Psoas muscle (tissue), 8 donors: ENCODE measurements at regions of chr13 and their contacts with region 1.

Region 1: DNA sequence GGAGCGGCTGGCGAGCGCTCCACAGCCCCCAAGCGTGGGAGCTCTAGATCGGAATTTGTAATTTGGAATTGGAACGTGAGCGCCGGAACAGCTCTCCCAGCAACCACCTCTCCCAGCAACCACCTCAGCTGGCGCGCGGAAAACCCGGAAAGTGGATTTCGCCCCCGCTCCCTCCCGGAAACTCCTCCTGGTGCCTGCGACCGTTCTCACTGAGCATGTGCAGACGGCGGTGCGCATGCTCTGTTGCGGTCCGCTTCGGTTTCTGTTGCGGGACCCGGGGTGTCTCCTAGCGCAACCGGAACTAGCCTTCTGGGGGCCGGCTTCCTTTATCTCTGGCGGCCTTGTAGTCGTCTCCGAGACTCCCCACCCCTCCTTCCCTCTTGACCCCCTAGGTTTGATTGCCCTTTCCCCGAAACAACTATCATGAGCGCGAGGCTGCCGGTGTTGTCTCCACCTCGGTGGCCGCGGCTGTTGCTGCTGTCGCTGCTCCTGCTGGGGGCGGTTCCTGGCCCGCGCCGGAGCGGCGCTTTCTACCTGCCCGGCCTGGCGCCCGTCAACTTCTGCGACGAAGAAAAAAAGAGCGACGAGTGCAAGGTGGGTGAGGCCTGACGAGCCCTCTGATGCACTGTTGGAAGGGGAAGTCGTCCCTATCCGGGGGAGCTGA is at the start of gene TM9SF2:
- DNase-seq: peak; percentile 98 to 99
- ATAC-seq: peak; percentile 82 to 88 (median 86)
- H3K4me3 ChIP-seq: peak within 1 kb of the TSS; percentile 82
- H3K27ac ChIP-seq: peak within 1 kb of the TSS; percentile 90
- H3K4me1 ChIP-seq: peaks cover 65% of the 10 kb centered on the region
- H3K27me3 ChIP-seq: no peaks in the 10 kb centered on the region
- CTCF ChIP-seq: no peak
- total RNA-seq, gene TM9SF2: 30.6 to 45.2 (median 42.7) TPM

Region 2: DNA sequence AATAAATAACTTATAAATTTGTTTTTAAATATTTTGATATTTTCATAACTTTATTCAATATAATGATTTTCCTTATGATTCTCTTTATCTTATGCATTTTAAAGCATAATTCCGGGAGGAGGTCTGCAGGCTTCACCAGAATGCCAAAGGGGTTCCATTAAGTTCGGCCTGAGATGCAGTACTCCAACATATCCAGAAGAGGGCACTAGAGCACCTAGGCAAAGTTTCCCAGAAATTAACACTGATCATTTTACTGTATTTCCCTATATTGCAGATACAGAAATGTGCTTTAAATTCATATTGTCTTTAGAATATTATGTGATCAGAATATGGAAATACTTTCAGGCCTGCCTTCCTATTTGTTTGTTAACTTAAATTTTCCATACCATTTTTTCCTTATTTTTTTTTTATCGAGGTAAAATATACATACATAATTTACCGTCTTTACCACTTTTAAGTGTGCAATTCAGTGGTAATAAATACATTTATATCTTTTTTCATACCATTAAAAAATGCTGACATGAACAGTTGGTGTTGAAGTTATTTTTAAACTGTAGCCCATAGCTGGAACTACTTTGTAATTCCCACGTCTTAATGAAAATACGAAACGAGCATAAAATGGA is 58.9 kb before region 1 on chr13:
- intact Hi-C with region 1: loop called (anchors 5 kb)
- DNase-seq: no peak
- ATAC-seq: peak in 3 of 4 donors; percentile 63 to 75 (median 74)
- H3K4me3 ChIP-seq: no peak overlapping the region
- H3K27ac ChIP-seq: no peak overlapping the region
- H3K4me1 ChIP-seq: no peaks in the 10 kb centered on the region
- H3K27me3 ChIP-seq: peaks cover 0 to 3% (median 0%) of the 10 kb centered on the region in 3 donors
- CTCF ChIP-seq: peak; percentile 97

Region 3: GRCh38 chr13:99459099-99459850 is 42.0 kb before region 1 on chr13:
- intact Hi-C with region 1: no loop called
- DNase-seq: no peak
- ATAC-seq: no peak
- H3K4me3 ChIP-seq: no peak overlapping the region
- H3K27ac ChIP-seq: no peak overlapping the region
- H3K4me1 ChIP-seq: no peaks in the 10 kb centered on the region
- H3K27me3 ChIP-seq: peaks cover 0 to 3% (median 0%) of the 10 kb centered on the region in 3 donors
- CTCF ChIP-seq: no peak

Region 4: GRCh38 chr13:99606324-99607066 is 105.2 kb after region 1 on chr13:
- intact Hi-C with region 1: loop called in 1 of 2 experiments (anchors 5 kb)
- DNase-seq: peak; percentile 87 to 96
- ATAC-seq: peak; percentile 95 to 97 (median 97)
- H3K4me3 ChIP-seq: peak within 1 kb of the TSS; percentile 89
- H3K27ac ChIP-seq: peak within 1 kb of the TSS; percentile 87
- H3K4me1 ChIP-seq: peaks cover 7% of the 10 kb centered on the region
- H3K27me3 ChIP-seq: no peaks in the 10 kb centered on the region
- CTCF ChIP-seq: no peak